T-cell (primary cell): ENCODE measurements at regions of chr18 and their contacts with region 1.

Region 1: GRCh38 chr18:22983175-22983574 is 50.0 kb downstream of the RBBP8 start:
- DNase-seq: peak in 1 of 35 experiments; percentile 44
- ATAC-seq: no peak
- H3K4me3 ChIP-seq: no peak overlapping the region
- H3K4me3 Mint-ChIP-seq: no peak overlapping the region
- H3K27ac ChIP-seq: no peak overlapping the region
- H3K27ac Mint-ChIP-seq: no peak overlapping the region
- H3K4me1 ChIP-seq: no peaks in the 10 kb centered on the region
- H3K4me1 Mint-ChIP-seq: peaks cover 0 to 7% (median 5%) of the 10 kb centered on the region in 3 donors
- H3K27me3 ChIP-seq: no peaks in the 10 kb centered on the region
- H3K27me3 Mint-ChIP-seq: no peaks in the 10 kb centered on the region

Region 2: DNA sequence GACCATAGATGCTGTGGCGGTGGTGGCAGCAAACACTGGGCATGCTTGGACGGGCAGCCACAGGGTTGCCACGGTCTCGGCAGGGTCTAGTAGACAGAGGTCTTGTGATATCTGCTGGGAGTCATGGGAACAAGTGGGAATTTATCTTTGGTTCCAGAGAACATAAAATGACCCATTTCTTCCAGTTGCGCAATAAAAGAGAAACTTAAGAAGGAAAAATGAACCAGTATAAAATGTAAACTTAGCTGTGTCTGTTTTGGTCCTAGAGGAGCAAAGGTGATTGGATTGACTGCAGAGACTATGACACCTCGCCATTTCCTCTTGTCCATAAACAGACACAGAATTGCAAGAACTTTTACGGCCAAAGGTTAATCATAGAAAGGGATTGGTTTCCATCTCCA is 182.6 kb before region 1 on chr18:
- CTCF ChIA-PET with region 1: interaction called, 3 to 14 read pairs
- POLR2A ChIA-PET with region 1: no interaction called
- DNase-seq: no peak
- ATAC-seq: no peak
- H3K4me3 ChIP-seq: no peak overlapping the region
- H3K4me3 Mint-ChIP-seq: no peak overlapping the region
- H3K27ac ChIP-seq: no peak overlapping the region
- H3K27ac Mint-ChIP-seq: no peak overlapping the region
- H3K4me1 ChIP-seq: no peaks in the 10 kb centered on the region
- H3K4me1 Mint-ChIP-seq: no peaks in the 10 kb centered on the region
- H3K27me3 ChIP-seq: no peaks in the 10 kb centered on the region
- H3K27me3 Mint-ChIP-seq: peaks cover 0 to 3% of the 10 kb centered on the region in 2 donors

Region 3: GRCh38 chr18:22933206-22933957 is 49.8 kb before region 1 on chr18 and contains the start of gene RBBP8:
- CTCF ChIA-PET with region 1: interaction called, 3 to 54 read pairs
- POLR2A ChIA-PET with region 1: no interaction called
- DNase-seq: peak; percentile 42 to 86 (median 66)
- ATAC-seq: peak; percentile 77 to 82 (median 80)
- H3K4me3 ChIP-seq: peak within 1 kb of the TSS; percentile 92 to 97
- H3K4me3 Mint-ChIP-seq: peak within 1 kb of the TSS; percentile 83 to 91 (median 90)
- H3K27ac ChIP-seq: peak within 1 kb of the TSS; percentile 96
- H3K27ac Mint-ChIP-seq: peak within 1 kb of the TSS; percentile 68 to 88
- H3K4me1 ChIP-seq: peaks cover 3 to 4% of the 10 kb centered on the region in 2 experiments
- H3K4me1 Mint-ChIP-seq: peaks cover 12 to 14% (median 13%) of the 10 kb centered on the region in 3 donors
- H3K27me3 ChIP-seq: no peaks in the 10 kb centered on the region
- H3K27me3 Mint-ChIP-seq: no peaks in the 10 kb centered on the region
- total RNA-seq, gene RBBP8: 2.9 to 5.8 (median 4.1) TPM

Region 4: GRCh38 chr18:23020555-23021294 is 37.5 kb after region 1 on chr18:
- CTCF ChIA-PET with region 1: no interaction called
- POLR2A ChIA-PET with region 1: no interaction called
- DNase-seq: peak in 1 of 35 experiments; percentile 10
- ATAC-seq: peak in 1 of 4 experiments; percentile 37
- H3K4me3 ChIP-seq: no peak overlapping the region
- H3K4me3 Mint-ChIP-seq: peak overlapping the region; percentile 7 to 68 (median 45)
- H3K27ac ChIP-seq: no peak overlapping the region
- H3K27ac Mint-ChIP-seq: peak overlapping the region; percentile 71 to 82
- H3K4me1 ChIP-seq: peaks cover 0 to 4% of the 10 kb centered on the region in 2 experiments
- H3K4me1 Mint-ChIP-seq: peaks cover 10 to 12% (median 10%) of the 10 kb centered on the region in 3 donors
- H3K27me3 ChIP-seq: no peaks in the 10 kb centered on the region
- H3K27me3 Mint-ChIP-seq: no peaks in the 10 kb centered on the region